MCF 10A (cell line): ENCODE measurements at regions of chr17 and their contacts with region 1.

Region 1: GRCh38 chr17:44864866-44865660 is 17.4 kb downstream of the HIGD1B start:
- DNase-seq: peak; percentile 71
- H3K4me3 Mint-ChIP-seq: no peak overlapping the region
- H3K27ac Mint-ChIP-seq: no peak overlapping the region
- H3K4me1 Mint-ChIP-seq: no peaks in the 10 kb centered on the region
- H3K27me3 Mint-ChIP-seq: no peaks in the 10 kb centered on the region
- CTCF ChIP-seq: peak; percentile 82

Region 2: DNA sequence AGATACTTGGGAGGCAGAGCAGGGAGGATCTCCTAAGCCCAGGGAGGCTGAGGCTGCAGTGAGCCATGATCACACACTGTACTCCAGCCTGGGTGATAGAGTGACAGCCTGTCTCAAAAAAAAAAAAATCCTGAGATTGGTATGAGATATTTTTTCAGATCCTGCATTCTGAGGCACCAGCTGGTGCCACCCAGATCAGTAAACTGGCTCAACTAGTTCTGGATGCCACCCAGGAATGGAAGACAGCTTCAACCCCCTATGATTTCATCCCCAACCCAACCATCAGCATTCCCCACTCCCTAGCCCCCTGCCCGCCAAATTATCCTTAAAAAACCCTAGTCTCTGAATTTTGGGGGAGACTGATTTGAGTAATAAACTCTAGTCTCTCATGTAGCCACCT is 27.8 kb before region 1 on chr17:
- CTCF ChIA-PET with region 1: interaction called, 15 read pairs
- POLR2A ChIA-PET with region 1: interaction called, 3 read pairs
- intact Hi-C with region 1: no loop called
- DNase-seq: no peak
- H3K4me3 Mint-ChIP-seq: no peak overlapping the region
- H3K27ac Mint-ChIP-seq: no peak overlapping the region
- H3K4me1 Mint-ChIP-seq: no peaks in the 10 kb centered on the region
- H3K27me3 Mint-ChIP-seq: no peaks in the 10 kb centered on the region
- CTCF ChIP-seq: no peak

Region 3: GRCh38 chr17:44850612-44851011 is 14.5 kb before region 1 on chr17:
- CTCF ChIA-PET with region 1: interaction called, 22 read pairs
- POLR2A ChIA-PET with region 1: no interaction called
- intact Hi-C with region 1: no loop called
- DNase-seq: no peak
- H3K4me3 Mint-ChIP-seq: no peak overlapping the region
- H3K27ac Mint-ChIP-seq: peak overlapping the region; percentile 33
- H3K4me1 Mint-ChIP-seq: no peaks in the 10 kb centered on the region
- H3K27me3 Mint-ChIP-seq: no peaks in the 10 kb centered on the region
- CTCF ChIP-seq: no peak

Region 4: GRCh38 chr17:44878627-44879221 is 13.7 kb after region 1 on chr17:
- CTCF ChIA-PET with region 1: interaction called, 35 read pairs
- POLR2A ChIA-PET with region 1: interaction called, 6 read pairs
- intact Hi-C with region 1: no loop called
- DNase-seq: peak; percentile 42
- H3K4me3 Mint-ChIP-seq: no peak overlapping the region
- H3K27ac Mint-ChIP-seq: no peak overlapping the region
- H3K4me1 Mint-ChIP-seq: no peaks in the 10 kb centered on the region
- H3K27me3 Mint-ChIP-seq: no peaks in the 10 kb centered on the region
- CTCF ChIP-seq: peak; percentile 41